Naive thymus-derived CD4-positive, alpha-beta T cell (primary cell): ENCODE measurements at regions of chr22 and their contacts with region 1.

Region 1: GRCh38 chr22:43955040-43955882 is at the start of gene SAMM50:
- DNase-seq: peak; percentile 77 to 93 (median 88)
- ATAC-seq: peak; percentile 98
- H3K4me3 ChIP-seq: peak within 1 kb of the TSS; percentile 76
- H3K4me3 Mint-ChIP-seq: peak within 1 kb of the TSS; percentile 90 to 100 (median 97)
- H3K27ac ChIP-seq: peak within 1 kb of the TSS; percentile 88
- H3K27ac Mint-ChIP-seq: peak within 1 kb of the TSS; percentile 86 to 97 (median 94)
- H3K4me1 ChIP-seq: peaks cover 9 to 13% of the 10 kb centered on the region in 2 donors
- H3K4me1 Mint-ChIP-seq: peaks cover 30 to 58% (median 46%) of the 10 kb centered on the region in 7 donors
- H3K27me3 ChIP-seq: peaks cover 0 to 4% of the 10 kb centered on the region in 2 donors
- H3K27me3 Mint-ChIP-seq: peaks cover 0 to 6% (median 4%) of the 10 kb centered on the region in 5 donors
- total RNA-seq, gene SAMM50: 25.9 to 47.1 (median 34.0) TPM

Region 2: GRCh38 chr22:43923631-43924464 is 31.4 kb before region 1 on chr22 and contains the start of gene PNPLA3:
- CTCF ChIA-PET with region 1: interaction called, 4 read pairs
- POLR2A ChIA-PET with region 1: interaction called, 5 read pairs
- intact Hi-C with region 1: loop called in 1 of 2 experiments (anchors 1 kb)
- DNase-seq: peak; percentile 48 to 84 (median 59)
- ATAC-seq: peak; percentile 96
- H3K4me3 ChIP-seq: peak within 1 kb of the TSS; percentile 57
- H3K4me3 Mint-ChIP-seq: peak within 1 kb of the TSS; percentile 80 to 95 (median 88)
- H3K27ac ChIP-seq: no peak within 1 kb of the TSS
- H3K27ac Mint-ChIP-seq: peak within 1 kb of the TSS in 8 of 9 donors; percentile 12 to 89 (median 42)
- H3K4me1 ChIP-seq: peaks cover 0 to 3% of the 10 kb centered on the region in 2 donors
- H3K4me1 Mint-ChIP-seq: peaks cover 4 to 6% (median 5%) of the 10 kb centered on the region in 7 donors
- H3K27me3 ChIP-seq: no peaks in the 10 kb centered on the region
- H3K27me3 Mint-ChIP-seq: peaks cover 4 to 37% (median 16%) of the 10 kb centered on the region in 5 donors
- total RNA-seq, gene PNPLA3: 0.19 to 0.29 TPM in 2 of 5 experiments, not detected in the others

Region 3: GRCh38 chr22:44026630-44027511 is 71.6 kb after region 1 on chr22:
- CTCF ChIA-PET with region 1: no interaction called
- POLR2A ChIA-PET with region 1: no interaction called
- intact Hi-C with region 1: loop called in 1 of 2 experiments (anchors 1 kb)
- DNase-seq: peak in 6 of 9 donors; percentile 19 to 73 (median 34)
- ATAC-seq: peak; percentile 86
- H3K4me3 ChIP-seq: peak overlapping the region; percentile 54
- H3K4me3 Mint-ChIP-seq: peak overlapping the region; percentile 45 to 89 (median 76)
- H3K27ac ChIP-seq: peak overlapping the region; percentile 63
- H3K27ac Mint-ChIP-seq: peak overlapping the region in 7 of 9 donors; percentile 55 to 97 (median 78)
- H3K4me1 ChIP-seq: peaks cover 15 to 24% of the 10 kb centered on the region in 2 donors
- H3K4me1 Mint-ChIP-seq: peaks cover 28 to 68% (median 40%) of the 10 kb centered on the region in 7 donors
- H3K27me3 ChIP-seq: no peaks in the 10 kb centered on the region
- H3K27me3 Mint-ChIP-seq: peaks cover 0 to 32% (median 27%) of the 10 kb centered on the region in 5 donors

Region 4: DNA sequence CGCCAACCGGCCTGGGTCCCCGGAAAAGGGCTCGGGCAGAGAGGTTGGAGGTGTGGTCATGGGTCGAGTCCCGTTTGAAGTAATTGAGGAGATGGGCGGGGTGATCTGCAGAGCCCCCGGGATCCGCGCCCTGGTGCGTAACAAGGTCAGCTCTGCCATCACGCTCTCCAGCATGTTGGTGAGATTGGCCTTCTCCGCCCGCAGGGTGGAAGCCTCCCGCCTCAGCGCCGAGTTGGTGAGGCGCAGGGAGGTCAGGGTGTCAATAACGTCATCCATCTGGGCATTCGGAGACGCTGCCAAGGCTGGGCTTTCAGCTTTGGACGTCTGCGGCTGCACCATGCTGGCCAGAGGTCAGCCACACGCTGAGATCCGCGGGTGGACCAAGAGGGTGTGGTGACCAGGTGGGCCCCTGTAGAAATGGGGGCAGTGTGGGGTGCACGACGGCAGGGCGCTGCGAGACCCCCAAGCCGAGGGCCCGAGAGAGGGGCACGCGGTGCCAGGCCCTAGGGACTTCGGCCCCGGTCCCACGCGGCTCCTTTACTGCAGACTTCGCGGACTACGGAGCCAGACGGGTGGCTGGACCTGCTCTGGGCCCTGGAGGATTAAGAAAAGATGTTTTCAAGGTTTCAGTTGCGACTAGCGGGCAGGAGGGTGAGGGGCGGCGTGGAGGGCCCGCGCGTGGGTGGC is 542.1 kb after region 1 on chr22:
- CTCF ChIA-PET with region 1: no interaction called
- POLR2A ChIA-PET with region 1: no interaction called
- intact Hi-C with region 1: loop called in 1 of 2 experiments (anchors 1 kb)
- DNase-seq: peak in 2 of 9 donors; percentile 8 to 11
- ATAC-seq: no peak
- H3K4me3 ChIP-seq: peak overlapping the region; percentile 61
- H3K4me3 Mint-ChIP-seq: peak overlapping the region; percentile 42 to 89 (median 72)
- H3K27ac ChIP-seq: peak overlapping the region; percentile 80
- H3K27ac Mint-ChIP-seq: peak overlapping the region; percentile 15 to 91 (median 73)
- H3K4me1 ChIP-seq: peaks cover 4 to 28% of the 10 kb centered on the region in 2 donors
- H3K4me1 Mint-ChIP-seq: peaks cover 5 to 47% (median 29%) of the 10 kb centered on the region in 7 donors
- H3K27me3 ChIP-seq: no peaks in the 10 kb centered on the region
- H3K27me3 Mint-ChIP-seq: peaks cover 0 to 9% (median 5%) of the 10 kb centered on the region in 5 donors

Region 5: GRCh38 chr22:44669561-44669976 is 714.3 kb after region 1 on chr22:
- CTCF ChIA-PET with region 1: no interaction called
- POLR2A ChIA-PET with region 1: no interaction called
- intact Hi-C with region 1: loop called in 1 of 2 experiments (anchors 1 kb)
- DNase-seq: no peak
- ATAC-seq: no peak
- H3K4me3 ChIP-seq: peak overlapping the region; percentile 54
- H3K4me3 Mint-ChIP-seq: peak overlapping the region; percentile 42 to 86 (median 78)
- H3K27ac ChIP-seq: peak overlapping the region; percentile 50
- H3K27ac Mint-ChIP-seq: peak overlapping the region in 6 of 9 donors; percentile 21 to 83 (median 44)
- H3K4me1 ChIP-seq: peaks cover 37 to 46% of the 10 kb centered on the region in 2 donors
- H3K4me1 Mint-ChIP-seq: peaks cover 28 to 61% (median 49%) of the 10 kb centered on the region in 7 donors
- H3K27me3 ChIP-seq: no peaks in the 10 kb centered on the region
- H3K27me3 Mint-ChIP-seq: peaks cover 0 to 19% (median 0%) of the 10 kb centered on the region in 5 donors

Region 6: GRCh38 chr22:44701824-44702478 is 746.7 kb after region 1 on chr22 and contains the start of gene PRR5:
- CTCF ChIA-PET with region 1: no interaction called
- POLR2A ChIA-PET with region 1: no interaction called
- intact Hi-C with region 1: loop called in 1 of 2 experiments (anchors 1 kb)
- DNase-seq: peak; percentile 73 to 85 (median 81)
- ATAC-seq: peak; percentile 94
- H3K4me3 ChIP-seq: peak within 1 kb of the TSS; percentile 64
- H3K4me3 Mint-ChIP-seq: peak within 1 kb of the TSS; percentile 72 to 83 (median 78)
- H3K27ac ChIP-seq: peak within 1 kb of the TSS; percentile 68
- H3K27ac Mint-ChIP-seq: peak within 1 kb of the TSS; percentile 74 to 91 (median 83)
- H3K4me1 ChIP-seq: peaks cover 21 to 23% of the 10 kb centered on the region in 2 donors
- H3K4me1 Mint-ChIP-seq: peaks cover 5 to 31% (median 17%) of the 10 kb centered on the region in 7 donors
- H3K27me3 ChIP-seq: no peaks in the 10 kb centered on the region
- H3K27me3 Mint-ChIP-seq: peaks cover 0 to 9% (median 0%) of the 10 kb centered on the region in 5 donors
- total RNA-seq, gene PRR5: 19.6 to 49.1 (median 44.4) TPM